HepG2 (cell line): ENCODE measurements at regions of chr12 and their contacts with region 1.

Region 1: DNA sequence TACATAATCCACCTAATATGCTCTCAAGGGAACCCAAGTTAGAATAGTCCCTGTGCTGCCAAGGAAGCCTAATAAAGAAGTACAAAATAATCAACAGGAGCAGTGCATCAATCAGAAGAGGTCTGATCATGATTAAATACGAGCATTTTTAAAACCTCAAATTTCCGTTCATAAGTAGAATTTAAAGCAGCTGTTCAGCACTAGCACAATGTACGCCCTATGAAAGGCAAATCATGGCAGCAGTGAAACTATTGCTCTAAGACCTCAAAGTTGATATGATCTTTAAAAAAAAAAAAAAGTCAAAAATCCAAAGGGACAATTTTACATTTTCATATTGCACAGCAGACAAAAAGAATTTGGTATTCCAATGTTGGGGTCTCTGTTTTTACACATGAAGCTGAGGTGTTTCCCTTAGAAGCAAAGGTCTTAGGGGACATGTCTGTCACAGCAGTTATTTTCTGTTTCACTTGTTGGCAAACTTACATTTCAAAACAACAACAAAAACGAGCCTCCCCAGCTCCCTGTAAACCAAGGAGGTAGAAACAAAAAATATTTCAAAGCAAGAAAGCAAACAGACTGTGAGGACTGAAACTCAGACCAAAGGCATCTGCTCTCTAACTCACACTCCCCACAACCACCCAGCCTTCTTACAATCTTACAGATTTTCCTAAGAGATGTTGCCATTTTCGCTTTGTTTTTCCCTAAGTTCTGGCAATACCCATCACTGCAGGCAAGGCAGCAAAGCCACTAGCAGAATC is 28.2 kb downstream of the SOX5 start:
- DNase-seq: no peak
- ATAC-seq: no peak
- H3K4me3 ChIP-seq: no peak overlapping the region
- H3K27ac ChIP-seq: no peak overlapping the region
- H3K4me1 ChIP-seq: 0 out of 2 replicates have a peak, but pooled peaks cover 9% of the 10 kb centered on the region
- H3K27me3 ChIP-seq: no peaks in the 10 kb centered on the region; a peak in 1 of 5 replicates
- CTCF ChIP-seq: no peak
- EP300 ChIP-seq: no peak
- POLR2A ChIP-seq: no peak
- RAD21 ChIP-seq: no peak

Region 2: DNA sequence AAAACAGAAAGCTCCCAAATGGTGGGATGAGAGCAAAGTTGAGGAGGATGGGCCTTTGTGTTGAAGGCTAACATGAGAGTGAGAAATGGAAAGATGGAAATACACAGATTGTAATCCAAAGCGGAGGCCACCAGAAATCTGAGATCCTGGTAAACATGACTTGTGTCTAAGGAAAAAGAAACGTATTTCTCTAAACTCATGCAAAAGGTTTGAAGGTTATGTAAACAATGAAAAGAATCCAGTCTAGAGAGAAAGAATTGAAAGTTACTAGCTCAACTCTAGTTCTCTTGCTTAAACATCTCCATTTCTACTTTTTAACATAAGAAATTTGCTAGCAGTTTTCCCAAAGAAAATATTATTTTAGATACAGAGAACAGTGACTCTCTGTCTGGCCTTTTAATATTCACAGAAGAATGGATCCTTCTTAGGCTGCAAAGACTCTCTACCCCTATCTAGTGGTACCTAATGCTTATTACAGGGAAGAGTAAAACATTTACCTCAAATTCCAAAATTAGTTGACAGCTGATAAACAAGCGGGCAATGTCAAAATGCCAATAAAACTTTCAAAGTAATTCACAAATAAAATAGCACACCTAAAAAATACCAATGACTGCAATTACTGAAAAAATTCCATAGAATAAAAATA is 104.0 kb after region 1 on chr12:
- CTCF ChIA-PET with region 1: no interaction called
- POLR2A ChIA-PET with region 1: no interaction called
- in situ Hi-C with region 1: no loop called
- intact Hi-C with region 1: loop called (anchors 1 kb)
- DNase-seq: peak; percentile 84
- ATAC-seq: peak; percentile 87
- H3K4me3 ChIP-seq: peak overlapping the region in 2 of 3 experiments; percentile 50 to 53; a peak in 2 of 6 replicates
- H3K27ac ChIP-seq: peak overlapping the region; percentile 72
- H3K4me1 ChIP-seq: peaks cover 71% of the 10 kb centered on the region
- H3K27me3 ChIP-seq: no peaks in the 10 kb centered on the region; a peak in 1 of 5 replicates
- CTCF ChIP-seq: peak; percentile 54
- EP300 ChIP-seq: peak in 1 of 2 experiments; percentile 74; a peak in 2 of 4 replicates
- POLR2A ChIP-seq: no peak
- RAD21 ChIP-seq: no peak